ENCODE measurements at regions of chr6 and their contacts with region 1.

Region 1: DNA sequence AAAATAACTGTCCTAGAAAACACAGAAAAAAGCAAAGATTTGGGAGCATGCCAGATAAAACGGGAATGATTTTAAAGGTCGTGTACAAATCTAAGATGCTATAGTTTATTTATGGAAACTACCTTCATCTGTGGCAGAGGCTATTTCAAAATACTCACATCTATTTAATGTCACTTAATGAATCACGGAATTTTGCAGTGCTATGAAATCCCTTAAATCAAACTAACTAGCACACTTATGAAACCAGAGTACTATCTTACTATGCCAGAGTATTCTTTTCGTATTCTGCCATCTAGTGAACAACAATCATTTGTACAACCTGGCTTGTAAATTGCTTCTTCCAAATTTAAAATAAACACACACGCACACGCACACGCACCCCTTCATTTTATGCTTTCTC is 77.9 kb upstream of the BMP5 start:
- DNase-seq: no peak
- H3K4me3 ChIP-seq: peak overlapping the region; percentile 53
- H3K27ac ChIP-seq: no peak overlapping the region
- H3K4me1 ChIP-seq: peaks cover 4% of the 10 kb centered on the region
- H3K27me3 ChIP-seq: no peaks in the 10 kb centered on the region
- CTCF ChIP-seq: peak; percentile 57

Region 2: GRCh38 chr6:55276745-55277530 is 676.4 kb before region 1 on chr6:
- intact Hi-C with region 1: loop called (anchors 10 kb)
- DNase-seq: peak; percentile 20
- H3K4me3 ChIP-seq: peak overlapping the region; percentile 46
- H3K27ac ChIP-seq: peak overlapping the region; percentile 60
- H3K4me1 ChIP-seq: peaks cover 5% of the 10 kb centered on the region
- H3K27me3 ChIP-seq: no peaks in the 10 kb centered on the region
- CTCF ChIP-seq: peak; percentile 71